ENCODE measurements at regions of chr1 and their contacts with region 1.

Region 1: GRCh38 chr1:64823691-64824476 is 79.0 kb downstream of the RAVER2 start:
- DNase-seq: no peak
- ATAC-seq: peak; percentile 72 to 79

Region 2: DNA sequence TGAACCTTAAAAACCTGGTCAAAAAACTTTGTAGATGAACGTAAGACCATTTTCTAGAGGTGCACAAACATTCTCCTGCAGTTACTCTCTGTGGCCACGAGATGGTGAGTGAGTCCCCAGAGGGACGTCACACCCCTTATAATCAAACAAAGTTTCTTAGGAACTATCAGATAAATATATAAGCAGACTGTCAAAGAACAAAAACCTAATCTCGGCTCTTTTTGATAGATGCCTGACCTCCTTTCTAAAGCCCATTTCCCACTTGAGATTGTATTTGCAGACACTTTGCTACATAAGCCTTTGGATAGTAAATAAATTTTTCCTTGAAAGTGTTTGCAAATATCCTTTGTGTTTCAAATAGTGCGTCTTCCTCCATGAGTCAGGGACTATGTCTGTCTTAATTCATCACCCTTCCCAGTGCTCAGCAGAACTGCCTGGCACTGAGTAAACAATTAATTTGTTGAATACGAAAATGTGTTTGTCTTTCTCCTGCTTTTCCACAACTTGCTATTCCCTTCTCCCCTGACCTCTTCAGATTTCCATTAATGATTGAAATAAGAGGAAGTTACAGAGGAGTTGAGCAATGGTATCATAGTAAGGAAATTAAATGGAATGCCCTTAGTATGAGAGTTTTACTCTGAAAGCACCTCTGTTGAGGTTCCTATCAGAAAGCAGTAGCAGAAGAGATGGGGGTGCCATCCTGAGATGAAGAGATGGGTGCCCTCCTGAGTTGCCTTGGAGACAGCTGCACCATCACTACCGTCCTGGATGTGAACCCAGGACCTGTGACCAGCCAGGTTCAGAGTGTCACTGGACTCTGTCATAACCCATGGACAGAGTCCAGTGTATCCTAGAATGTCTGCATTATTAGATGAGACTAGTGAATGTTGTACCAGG is 136.8 kb before region 1 on chr1:
- intact Hi-C with region 1: loop called (anchors 1 to 10 kb)
- DNase-seq: no peak
- ATAC-seq: peak; percentile 47 to 73

Region 3: DNA sequence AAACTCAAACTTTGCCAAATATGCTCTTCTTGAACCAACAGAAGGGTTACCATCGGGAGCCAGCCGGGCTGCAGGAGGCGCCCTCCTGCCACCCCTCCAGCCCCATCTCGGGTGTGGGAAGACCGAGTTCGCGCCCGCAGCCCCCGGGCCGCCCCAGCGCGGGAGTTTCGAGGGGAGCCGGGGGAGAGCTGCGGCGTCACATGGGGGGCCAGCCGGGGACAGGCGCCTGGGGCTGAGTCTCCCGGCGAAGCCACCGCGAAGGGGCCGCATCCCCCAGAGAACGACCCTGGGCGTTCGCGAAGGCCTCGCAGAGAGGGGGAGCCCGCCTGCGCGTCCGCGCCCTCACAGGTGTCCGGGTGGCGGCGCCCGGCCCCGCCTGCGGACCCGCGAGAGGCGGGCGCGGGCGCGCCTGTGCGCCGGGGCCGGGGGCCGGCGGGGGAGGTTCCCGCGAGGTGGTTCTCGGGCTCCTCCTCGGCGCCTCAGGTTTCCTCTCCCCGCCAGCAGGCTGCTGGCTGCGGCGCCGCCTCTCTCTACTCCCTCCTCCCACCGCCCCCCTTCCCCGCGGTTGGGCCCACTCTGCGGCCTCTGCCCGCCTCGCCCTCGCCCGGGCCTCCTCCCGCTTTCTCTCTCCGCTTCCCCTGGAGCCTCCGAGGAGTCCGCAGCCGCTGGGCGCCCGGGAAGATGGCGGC is 79.2 kb before region 1 on chr1 and contains the start of gene RAVER2:
- intact Hi-C with region 1: loop called (anchors 5 to 10 kb)
- DNase-seq: peak; percentile 81
- ATAC-seq: peak; percentile 91 to 92
- total RNA-seq, gene RAVER2: 16.3 to 21.0 TPM

Region 4: DNA sequence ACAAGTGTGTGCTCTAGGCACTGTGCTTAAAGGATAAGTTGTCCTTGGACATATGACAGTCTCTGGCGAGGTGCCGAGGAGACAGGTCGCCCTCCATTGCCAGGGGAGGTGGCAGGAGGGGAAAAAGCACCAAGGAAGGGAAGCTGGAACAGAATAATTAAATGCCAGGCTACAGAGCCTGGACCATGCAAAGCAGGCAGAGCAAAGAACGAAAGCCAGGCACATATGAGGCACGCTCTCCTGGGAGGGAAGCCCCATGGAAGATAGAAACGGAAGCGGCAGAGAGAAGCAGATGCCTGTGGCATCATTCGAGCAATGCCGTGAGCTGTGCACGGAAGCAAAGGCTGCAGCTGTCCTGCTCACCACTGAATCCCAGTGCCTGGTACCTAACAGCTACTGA is 51.2 kb after region 1 on chr1:
- intact Hi-C with region 1: no loop called
- DNase-seq: no peak
- ATAC-seq: peak; percentile 22 to 33